AG04449 (cell line): ENCODE measurements at regions of chr11 and their contacts with region 1.

Region 1: DNA sequence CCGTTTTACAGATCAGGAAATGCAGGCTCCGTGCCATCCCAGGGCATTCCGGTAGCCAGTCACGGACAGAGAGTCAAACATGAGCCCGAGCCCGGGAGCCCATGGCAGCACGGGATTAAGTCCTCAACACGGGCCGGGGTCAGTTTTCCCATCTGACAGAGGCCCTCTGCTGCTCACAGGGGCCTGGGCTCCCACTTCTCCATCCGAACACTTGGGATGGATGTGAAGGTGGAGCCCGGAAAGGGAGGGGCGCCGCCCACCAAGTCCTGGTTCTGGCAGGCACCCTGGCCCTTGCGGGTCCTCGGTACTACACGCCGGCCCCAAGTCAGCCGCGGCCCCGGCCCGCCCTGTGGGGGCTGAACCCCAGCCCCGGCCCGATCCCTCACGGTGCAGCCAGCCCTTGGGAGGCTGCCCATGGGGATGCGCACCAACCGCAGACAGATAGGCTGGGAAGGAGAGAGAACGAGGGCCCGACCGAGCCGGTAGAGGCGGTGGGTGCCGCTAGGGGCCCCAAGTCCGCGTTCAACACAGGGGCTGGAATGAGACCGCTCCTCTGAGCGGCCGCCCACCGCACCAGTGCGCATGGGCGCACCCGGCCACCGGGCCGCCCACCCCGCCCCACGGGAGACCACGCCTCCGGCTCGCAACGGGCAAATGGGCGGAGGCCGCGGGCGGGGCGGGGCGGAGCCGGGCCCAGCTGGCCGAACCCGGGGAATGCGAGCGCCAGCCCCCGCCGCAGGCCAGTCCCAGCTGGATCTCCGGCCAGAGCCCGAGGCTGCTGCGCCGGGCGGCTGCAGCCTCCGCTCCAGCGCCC is at the start of gene CAPN5:
- DNase-seq: no peak
- H3K4me3 ChIP-seq: peak within 1 kb of the TSS; percentile 72
- CTCF ChIP-seq: peak; percentile 67

Region 2: DNA sequence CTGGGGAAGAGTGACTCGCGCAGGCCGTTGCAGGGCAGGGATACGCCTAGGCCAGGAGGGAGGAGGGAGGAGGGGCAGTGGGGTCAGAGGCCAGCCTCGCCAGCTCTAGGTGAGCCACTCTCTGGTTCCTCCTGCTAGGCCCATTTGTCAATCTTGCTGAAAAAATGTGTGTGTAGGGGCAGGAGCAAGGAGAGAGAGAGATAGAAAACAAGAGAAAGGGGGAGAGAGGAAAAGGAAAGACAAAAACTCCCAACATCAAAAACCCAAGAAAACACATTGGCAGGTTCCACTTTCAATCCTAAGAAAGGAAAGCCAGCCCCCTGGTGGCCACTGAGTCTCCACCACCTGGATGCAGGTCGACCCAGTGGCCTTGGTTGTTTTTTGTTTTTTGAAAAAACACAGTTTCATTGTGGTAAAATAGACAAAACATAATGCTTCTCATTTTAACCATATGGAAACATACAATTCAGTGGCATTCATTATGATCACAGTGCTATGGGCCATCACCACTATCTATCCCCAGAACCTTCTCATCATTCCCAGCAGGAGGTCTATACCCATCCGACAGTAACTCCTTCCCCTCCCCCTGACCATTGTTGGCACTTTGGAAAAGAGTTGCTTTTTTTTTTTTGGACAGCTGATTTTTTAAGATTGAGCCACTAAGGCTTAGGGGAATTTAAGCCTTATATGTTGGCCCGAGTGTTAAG is 47.1 kb after region 1 on chr11:
- CTCF ChIA-PET with region 1: interaction called, 16 read pairs
- POLR2A ChIA-PET with region 1: no interaction called
- DNase-seq: no peak
- H3K4me3 ChIP-seq: no peak overlapping the region
- CTCF ChIP-seq: peak; percentile 58